ENCODE measurements at regions of chr1 and their contacts with region 1.

Region 1: DNA sequence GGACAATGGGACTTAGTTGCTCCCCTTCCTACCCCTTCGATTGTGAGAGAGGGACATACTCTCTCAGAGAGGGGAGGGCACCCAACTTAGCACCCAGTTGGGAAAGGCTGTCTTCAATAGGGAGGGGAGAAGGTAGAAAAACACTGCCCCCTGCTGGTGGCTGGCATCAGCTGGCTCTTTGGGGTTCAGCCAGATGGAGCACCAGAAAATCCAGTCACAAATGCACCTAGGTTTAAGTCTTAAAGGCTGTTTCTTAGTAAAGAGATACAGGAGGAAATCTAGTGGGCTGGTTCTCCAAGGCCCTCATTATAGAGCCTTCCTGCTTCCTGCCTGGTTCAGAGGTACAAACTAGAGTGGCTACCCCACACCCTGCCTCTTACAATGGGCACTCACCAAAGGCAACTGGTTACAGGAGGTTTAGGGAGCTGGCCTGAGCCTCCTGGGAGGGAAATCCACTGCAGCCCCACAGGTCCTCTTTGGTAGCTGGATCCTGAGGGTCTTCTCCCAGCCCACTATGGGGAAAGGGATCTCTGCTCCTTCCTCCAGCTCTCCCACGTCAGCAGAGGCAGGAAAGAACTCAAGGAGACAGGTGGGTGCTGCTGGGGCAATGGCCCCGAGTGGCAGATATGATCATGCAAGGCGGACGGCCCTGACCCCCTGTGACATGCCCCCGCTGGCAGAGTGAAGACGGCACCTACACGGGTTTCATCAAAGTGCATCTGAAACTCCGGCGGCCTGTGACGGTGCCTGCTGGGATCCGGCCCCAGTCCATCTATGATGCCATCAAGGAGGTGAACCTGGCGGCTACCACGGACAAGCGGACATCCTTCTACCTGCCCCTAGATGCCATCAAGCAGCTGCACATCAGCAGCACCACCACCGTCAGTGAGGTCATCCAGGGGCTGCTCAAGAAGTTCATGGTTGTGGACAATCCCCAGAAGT is 28.3 kb downstream of the EIF2D start:
- DNase-seq: peak; percentile 36 to 91
- H3K4me3 ChIP-seq: no peak overlapping the region
- H3K27ac ChIP-seq: no peak overlapping the region
- H3K4me1 ChIP-seq: no peaks in the 10 kb centered on the region
- H3K27me3 ChIP-seq: no peaks in the 10 kb centered on the region
- CTCF ChIP-seq: peak; percentile 86 to 88 (median 87)
- EP300 ChIP-seq: no peak
- POLR2A ChIP-seq: no peak
- RAD21 ChIP-seq: peak; percentile 89 to 91

Region 2: DNA sequence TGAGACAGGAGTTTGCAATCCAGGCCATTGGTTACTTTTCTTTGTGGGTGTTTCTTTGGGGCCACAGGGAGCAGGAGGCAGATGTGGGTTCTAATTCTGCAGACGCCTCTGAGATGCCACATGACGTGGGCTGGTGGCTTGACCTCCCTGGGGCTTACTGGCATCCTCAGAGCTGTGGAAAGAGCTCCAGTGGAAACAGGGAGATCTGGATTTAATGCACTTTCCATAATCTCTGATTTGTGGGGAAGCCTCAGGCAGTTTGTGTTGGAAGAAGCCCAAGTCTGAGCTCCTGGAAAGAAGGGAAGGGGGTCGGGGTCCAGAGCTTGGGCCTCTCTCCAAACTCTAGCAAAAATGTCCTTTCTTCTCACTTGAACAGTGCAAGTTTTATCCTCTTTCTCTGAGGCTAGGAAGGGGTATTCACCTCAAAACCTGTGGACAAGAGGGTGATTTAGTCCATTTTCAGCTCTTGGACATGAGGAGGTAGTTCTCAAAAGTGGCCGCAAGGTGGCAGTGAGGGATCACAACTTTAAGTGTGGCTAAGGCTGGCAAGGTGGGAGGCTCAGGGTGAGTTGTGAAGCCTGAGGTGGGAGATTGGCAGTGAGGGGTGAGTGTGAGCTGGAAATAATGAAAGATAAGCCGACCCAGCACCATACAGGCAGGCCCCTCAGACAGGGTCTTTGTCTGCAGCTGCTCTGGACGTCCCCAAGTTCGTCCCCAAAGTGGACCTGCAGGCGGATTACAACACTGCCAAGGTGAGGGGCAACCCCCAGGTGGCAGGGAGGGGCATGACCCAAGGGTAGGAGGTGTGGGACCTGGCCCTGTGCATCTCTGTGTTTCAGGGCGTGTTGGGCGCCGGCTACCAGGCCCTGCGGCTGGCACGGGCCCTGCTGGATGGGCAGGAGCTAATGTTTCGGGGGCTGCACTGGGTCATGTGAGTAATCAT is 104.5 kb before region 1 on chr1:
- CTCF ChIA-PET with region 1: interaction called, 71 read pairs
- POLR2A ChIA-PET with region 1: interaction called, 3 read pairs
- DNase-seq: peak; percentile 60 to 81
- H3K4me3 ChIP-seq: no peak overlapping the region
- H3K27ac ChIP-seq: no peak overlapping the region
- H3K4me1 ChIP-seq: peaks cover 0 to 3% (median 0%) of the 10 kb centered on the region in 4 experiments; a peak in 1 of 7 replicates
- H3K27me3 ChIP-seq: no peaks in the 10 kb centered on the region
- CTCF ChIP-seq: peak; percentile 65 to 87 (median 82)
- EP300 ChIP-seq: no peak
- POLR2A ChIP-seq: no peak
- RAD21 ChIP-seq: peak; percentile 81 to 82

Region 3: GRCh38 chr1:206507284-206508129 is 76.5 kb before region 1 on chr1 and contains the start of gene RASSF5:
- CTCF ChIA-PET with region 1: interaction called, 167 read pairs
- POLR2A ChIA-PET with region 1: interaction called, 4 read pairs
- DNase-seq: peak; percentile 27 to 94
- H3K4me3 ChIP-seq: peak within 1 kb of the TSS; percentile 37 to 71 (median 64)
- H3K27ac ChIP-seq: no peak within 1 kb of the TSS
- H3K4me1 ChIP-seq: peaks cover 2 to 14% (median 6%) of the 10 kb centered on the region in 4 experiments; a peak in 6 of 7 replicates
- H3K27me3 ChIP-seq: peaks cover 17 to 49% (median 47%) of the 10 kb centered on the region in 4 experiments
- CTCF ChIP-seq: no peak
- EP300 ChIP-seq: no peak
- POLR2A ChIP-seq: peak; percentile 87 to 88
- RAD21 ChIP-seq: no peak
- total RNA-seq, gene RASSF5: 1.8 and 2.3 TPM in 2 replicates

Region 4: DNA sequence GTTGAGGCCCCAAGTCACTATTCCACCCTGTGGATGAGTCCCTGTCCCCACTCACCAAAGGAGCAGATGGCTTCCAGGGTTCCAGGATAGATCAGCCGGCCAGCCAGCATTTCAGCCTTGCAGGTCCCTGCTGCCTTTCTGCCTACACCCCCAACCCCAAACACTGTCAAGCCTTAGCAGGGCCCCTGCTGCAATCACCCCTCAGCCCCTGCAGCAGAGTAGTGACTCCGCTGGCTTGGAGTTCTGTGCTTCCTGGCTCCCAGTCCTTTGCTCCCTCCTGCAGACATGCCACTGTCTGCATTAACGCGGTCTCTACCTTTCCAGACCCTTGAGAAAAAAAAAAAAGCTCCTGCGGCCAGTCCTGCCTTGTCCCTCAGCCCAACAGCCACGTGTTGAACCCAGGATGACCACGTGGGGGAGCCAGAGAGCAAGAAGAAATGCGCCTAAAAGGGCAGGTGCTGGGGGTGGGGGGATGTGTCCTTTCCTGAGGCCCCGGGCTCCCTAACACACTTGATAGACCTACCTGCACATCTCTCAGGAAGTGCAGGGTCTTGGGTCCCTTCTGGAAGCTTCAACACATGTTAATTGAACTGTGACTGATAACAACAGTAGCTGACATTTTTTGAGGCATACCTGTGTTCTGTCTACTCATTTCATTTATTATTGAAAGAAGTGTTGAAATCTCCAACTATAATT is 39.3 kb before region 1 on chr1:
- CTCF ChIA-PET with region 1: interaction called, 298 read pairs
- POLR2A ChIA-PET with region 1: interaction called, 4 read pairs
- DNase-seq: peak; percentile 50 to 99
- H3K4me3 ChIP-seq: no peak overlapping the region
- H3K27ac ChIP-seq: no peak overlapping the region
- H3K4me1 ChIP-seq: peaks cover 0 to 3% (median 2%) of the 10 kb centered on the region in 4 experiments; a peak in 2 of 7 replicates
- H3K27me3 ChIP-seq: no peaks in the 10 kb centered on the region
- CTCF ChIP-seq: peak; percentile 84 to 93 (median 92)
- EP300 ChIP-seq: peak in 1 of 2 experiments; percentile 58; a peak in 1 of 3 replicates
- POLR2A ChIP-seq: no peak
- RAD21 ChIP-seq: peak; percentile 80 to 88

Region 5: DNA sequence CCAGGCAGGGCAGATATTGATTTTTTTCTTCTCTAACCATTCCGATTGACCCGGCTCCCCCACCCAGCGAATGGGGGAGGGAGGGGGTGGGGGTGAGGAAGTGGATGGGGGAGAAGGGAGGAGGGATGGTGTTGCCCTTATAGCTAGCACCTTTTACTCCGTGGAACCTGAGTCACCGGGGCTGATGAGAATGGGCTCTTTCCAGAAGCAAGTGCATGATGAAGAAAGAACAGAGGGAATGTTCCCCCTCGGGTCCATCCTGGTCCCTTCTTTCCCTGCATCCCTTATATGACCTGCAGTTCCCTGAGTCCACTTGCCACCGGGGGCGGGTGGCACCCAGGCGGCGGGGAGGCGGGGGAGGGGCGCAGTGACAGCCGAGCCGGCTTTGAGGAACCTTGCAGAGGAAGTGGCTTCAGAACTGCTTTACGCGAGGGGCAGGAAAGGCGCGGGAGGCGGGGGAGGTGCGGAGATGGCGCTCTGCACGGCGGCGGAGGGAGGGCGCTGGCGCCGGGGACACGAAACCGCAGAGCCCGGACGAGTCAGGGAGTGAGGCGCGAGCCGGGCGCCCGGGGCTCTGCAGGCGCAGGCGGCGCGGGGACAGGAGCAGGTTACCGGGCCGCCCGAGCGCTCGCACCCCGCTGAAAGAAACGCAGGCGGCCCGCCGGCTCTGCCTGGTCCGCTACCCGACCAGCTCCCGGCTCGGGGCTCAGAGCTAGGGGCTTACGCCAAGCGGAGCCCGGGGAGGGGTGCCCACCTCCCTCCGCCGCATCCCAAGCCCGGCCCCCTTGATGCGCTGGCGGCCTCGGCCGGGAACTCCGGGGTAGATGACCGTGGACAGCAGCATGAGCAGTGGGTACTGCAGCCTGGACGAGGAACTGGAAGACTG is 27.0 kb before region 1 on chr1:
- CTCF ChIA-PET with region 1: interaction called, 34 read pairs
- POLR2A ChIA-PET with region 1: interaction called, 3 read pairs
- DNase-seq: peak in 1 of 2 experiments; percentile 77
- H3K4me3 ChIP-seq: peak overlapping the region; percentile 43 to 65 (median 48)
- H3K27ac ChIP-seq: no peak overlapping the region
- H3K4me1 ChIP-seq: peaks cover 4 to 7% (median 5%) of the 10 kb centered on the region in 4 experiments; a peak in 6 of 7 replicates
- H3K27me3 ChIP-seq: peaks cover 5 to 29% (median 19%) of the 10 kb centered on the region in 4 experiments
- CTCF ChIP-seq: no peak
- EP300 ChIP-seq: no peak
- POLR2A ChIP-seq: no peak
- RAD21 ChIP-seq: no peak

Region 6: GRCh38 chr1:206600527-206600926 is 16.5 kb after region 1 on chr1:
- CTCF ChIA-PET with region 1: interaction called, 21 read pairs
- POLR2A ChIA-PET with region 1: interaction called, 3 read pairs
- DNase-seq: no peak
- H3K4me3 ChIP-seq: no peak overlapping the region
- H3K27ac ChIP-seq: no peak overlapping the region
- H3K4me1 ChIP-seq: no peaks in the 10 kb centered on the region
- H3K27me3 ChIP-seq: no peaks in the 10 kb centered on the region
- CTCF ChIP-seq: no peak
- EP300 ChIP-seq: no peak
- POLR2A ChIP-seq: no peak
- RAD21 ChIP-seq: no peak

Region 7: GRCh38 chr1:206684478-206685333 is 100.7 kb after region 1 on chr1 and contains the start of gene MAPKAPK2:
- CTCF ChIA-PET with region 1: no interaction called
- POLR2A ChIA-PET with region 1: no interaction called
- DNase-seq: peak in 1 of 2 experiments; percentile 73
- H3K4me3 ChIP-seq: peak within 1 kb of the TSS; percentile 80 to 88 (median 82)
- H3K27ac ChIP-seq: peak within 1 kb of the TSS; percentile 52; the same call in 1 of the 2 replicates
- H3K4me1 ChIP-seq: peaks cover 10 to 24% (median 14%) of the 10 kb centered on the region in 4 experiments
- H3K27me3 ChIP-seq: peaks cover 9 to 31% (median 26%) of the 10 kb centered on the region in 4 experiments
- CTCF ChIP-seq: no peak
- EP300 ChIP-seq: no peak
- POLR2A ChIP-seq: no peak
- RAD21 ChIP-seq: no peak
- total RNA-seq, gene MAPKAPK2: 44.9 and 46.6 TPM in 2 replicates

Region 8: DNA sequence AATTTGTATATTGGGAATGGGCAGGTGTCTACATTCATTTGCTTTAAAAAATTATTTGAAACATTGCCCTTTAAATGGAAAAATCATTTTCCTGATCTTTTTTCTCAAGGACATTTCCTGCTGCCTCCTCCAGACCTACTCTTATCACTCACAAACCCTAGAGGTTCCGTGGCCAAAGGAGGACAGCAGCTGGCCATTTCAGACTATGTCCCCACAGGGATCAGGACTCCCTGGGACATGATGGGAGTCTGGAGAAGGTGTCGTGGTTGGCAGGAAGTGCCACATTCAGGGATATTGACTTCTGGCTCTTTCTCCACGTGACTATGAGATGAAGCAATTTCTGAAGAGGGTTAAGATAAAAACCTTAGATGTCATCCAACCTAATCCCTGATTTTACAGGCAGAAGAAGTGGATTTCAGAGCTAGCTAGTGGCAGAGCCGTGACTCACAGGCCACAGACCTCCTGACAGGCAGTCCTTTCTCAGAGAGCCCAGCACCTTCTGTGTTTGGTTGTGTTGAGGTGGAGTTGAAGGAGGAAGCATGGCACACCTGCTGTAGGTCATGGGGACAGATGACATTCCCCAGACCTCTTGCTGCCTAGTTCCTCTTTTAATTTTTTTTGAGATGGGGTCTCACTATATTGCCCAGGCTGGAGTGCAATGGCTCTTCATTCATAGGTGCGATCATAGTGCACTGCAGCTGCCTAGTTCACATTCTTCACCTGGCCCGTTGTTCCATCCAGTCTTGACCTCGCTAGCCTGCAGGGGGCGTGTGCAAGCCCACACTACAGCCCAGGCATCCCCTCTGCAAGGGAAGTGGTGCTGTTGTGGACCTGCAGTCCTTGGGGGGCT is 213.8 kb after region 1 on chr1:
- CTCF ChIA-PET with region 1: no interaction called
- POLR2A ChIA-PET with region 1: no interaction called
- DNase-seq: peak; percentile 25 to 69
- H3K4me3 ChIP-seq: no peak overlapping the region
- H3K27ac ChIP-seq: no peak overlapping the region
- H3K4me1 ChIP-seq: no peaks in the 10 kb centered on the region
- H3K27me3 ChIP-seq: no peaks in the 10 kb centered on the region
- CTCF ChIP-seq: peak; percentile 71 to 98 (median 91)
- EP300 ChIP-seq: no peak
- POLR2A ChIP-seq: no peak
- RAD21 ChIP-seq: peak; percentile 49 to 64

Measured in H1 (cell line).